ENCODE measurements at regions of chr3 and their contacts with region 1.

Region 1: DNA sequence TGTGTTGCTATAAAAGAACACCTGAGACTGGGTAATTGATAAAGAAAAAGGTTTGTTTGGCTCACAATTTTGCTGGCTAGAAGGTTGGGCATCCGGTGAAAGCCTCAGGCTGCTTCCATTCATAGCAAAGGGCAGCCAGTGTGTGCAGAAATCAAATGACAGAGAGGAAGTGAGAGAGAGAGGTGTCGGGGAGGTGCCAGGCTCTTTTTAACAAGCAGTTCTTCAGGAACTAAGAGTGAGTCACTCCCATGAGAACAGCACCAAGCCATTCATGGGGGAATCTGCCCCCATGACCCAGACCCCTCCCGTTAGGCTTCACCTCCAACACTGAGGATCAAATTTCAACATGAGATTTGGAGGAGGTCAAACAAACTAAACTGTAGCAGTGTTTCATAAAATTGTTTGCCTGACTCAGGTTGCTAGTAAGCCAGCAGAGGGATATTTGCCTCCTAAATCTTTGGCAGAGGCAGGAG is 4.5 kb upstream of the PARP15 start:
- DNase-seq: no peak
- ATAC-seq: peak; percentile 73
- H3K4me3 ChIP-seq: no peak overlapping the region
- H3K4me3 Mint-ChIP-seq: peak overlapping the region in 5 of 10 donors; percentile 10 to 68 (median 40)
- H3K27ac ChIP-seq: no peak overlapping the region
- H3K27ac Mint-ChIP-seq: peak overlapping the region; percentile 29 to 84 (median 67)
- H3K4me1 ChIP-seq: peaks cover 23 to 24% of the 10 kb centered on the region in 2 donors
- H3K4me1 Mint-ChIP-seq: peaks cover 30 to 74% (median 70%) of the 10 kb centered on the region in 7 donors
- H3K27me3 ChIP-seq: no peaks in the 10 kb centered on the region
- H3K27me3 Mint-ChIP-seq: no peaks in the 10 kb centered on the region

Region 2: GRCh38 chr3:122594025-122594424 is 21.0 kb after region 1 on chr3:
- CTCF ChIA-PET with region 1: interaction called, 3 read pairs
- POLR2A ChIA-PET with region 1: no interaction called
- intact Hi-C with region 1: loop called (anchors 2 kb)
- DNase-seq: no peak
- ATAC-seq: no peak
- H3K4me3 ChIP-seq: no peak overlapping the region
- H3K4me3 Mint-ChIP-seq: no peak overlapping the region
- H3K27ac ChIP-seq: no peak overlapping the region
- H3K27ac Mint-ChIP-seq: no peak overlapping the region
- H3K4me1 ChIP-seq: no peaks in the 10 kb centered on the region
- H3K4me1 Mint-ChIP-seq: peaks cover 2 to 11% (median 6%) of the 10 kb centered on the region in 7 donors
- H3K27me3 ChIP-seq: no peaks in the 10 kb centered on the region
- H3K27me3 Mint-ChIP-seq: no peaks in the 10 kb centered on the region

Region 3: DNA sequence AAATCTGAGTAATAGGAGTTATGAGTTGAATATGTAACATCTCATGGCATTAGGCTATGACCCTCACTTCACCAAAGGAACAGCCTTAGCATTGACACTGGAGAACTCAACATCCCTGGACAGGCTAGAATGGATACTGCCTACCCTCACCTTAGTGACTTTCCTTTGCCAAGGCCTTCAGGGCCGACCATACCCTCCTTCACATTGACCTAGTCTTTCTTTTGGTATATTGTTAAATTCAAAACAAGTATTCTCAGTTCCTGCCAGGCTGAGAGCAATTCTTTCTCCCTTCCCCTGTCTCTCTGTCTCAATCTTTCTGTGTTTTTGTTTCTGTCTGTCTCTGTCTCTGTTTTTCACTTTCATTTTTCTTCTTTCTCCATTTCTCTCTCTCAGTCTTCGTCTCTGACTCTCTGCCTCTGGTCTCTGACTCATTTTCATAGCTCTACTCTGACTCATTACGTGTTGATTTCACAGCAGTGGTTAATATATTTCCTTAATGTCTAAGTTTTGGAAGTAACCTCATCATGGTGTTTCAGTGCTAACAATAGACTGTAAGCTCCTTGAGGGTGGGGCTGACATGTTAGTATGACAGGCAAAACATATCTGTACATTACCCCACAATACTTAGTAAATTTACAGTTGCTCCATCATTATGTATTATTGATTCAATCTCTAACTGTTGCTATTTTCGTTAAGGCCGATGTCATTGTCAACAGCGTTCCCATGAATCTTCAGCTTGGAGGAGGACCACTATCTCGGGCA is 37.0 kb after region 1 on chr3:
- CTCF ChIA-PET with region 1: no interaction called
- POLR2A ChIA-PET with region 1: no interaction called
- intact Hi-C with region 1: loop called in 1 of 2 experiments (anchors 1 kb)
- DNase-seq: peak in 1 of 9 donors; percentile 30
- ATAC-seq: peak; percentile 73
- H3K4me3 ChIP-seq: no peak overlapping the region
- H3K4me3 Mint-ChIP-seq: peak overlapping the region in 2 of 10 donors; percentile 72 to 74
- H3K27ac ChIP-seq: no peak overlapping the region
- H3K27ac Mint-ChIP-seq: peak overlapping the region in 7 of 9 donors; percentile 39 to 96 (median 89)
- H3K4me1 ChIP-seq: no peaks in the 10 kb centered on the region
- H3K4me1 Mint-ChIP-seq: peaks cover 5 to 33% (median 8%) of the 10 kb centered on the region in 7 donors
- H3K27me3 ChIP-seq: no peaks in the 10 kb centered on the region
- H3K27me3 Mint-ChIP-seq: no peaks in the 10 kb centered on the region

Region 4: DNA sequence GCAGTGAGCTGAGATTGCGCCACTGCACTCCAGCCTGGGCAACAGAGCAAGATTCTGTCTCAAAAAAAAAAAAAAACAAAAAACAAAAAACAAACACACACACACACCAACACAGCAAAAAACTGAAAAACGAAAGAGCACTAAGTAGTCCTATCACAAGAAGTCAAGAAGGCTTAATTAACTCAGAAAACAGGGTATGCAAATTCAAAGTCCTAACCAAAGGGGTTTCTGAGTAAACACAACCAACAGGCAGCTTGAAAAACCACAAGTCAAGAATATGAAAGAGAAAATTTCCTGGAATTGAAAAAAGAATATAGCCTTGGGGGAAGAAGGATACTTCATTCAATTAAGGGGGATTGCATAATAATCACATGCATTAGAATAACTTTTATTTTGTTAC is 70.0 kb after region 1 on chr3:
- CTCF ChIA-PET with region 1: interaction called, 5 read pairs
- POLR2A ChIA-PET with region 1: no interaction called
- intact Hi-C with region 1: loop called in 1 of 2 experiments (anchors 1 kb)
- DNase-seq: no peak
- ATAC-seq: no peak
- H3K4me3 ChIP-seq: no peak overlapping the region
- H3K4me3 Mint-ChIP-seq: peak overlapping the region in 1 of 10 donors; percentile 68
- H3K27ac ChIP-seq: no peak overlapping the region
- H3K27ac Mint-ChIP-seq: peak overlapping the region in 2 of 9 donors; percentile 23 to 65
- H3K4me1 ChIP-seq: no peaks in the 10 kb centered on the region
- H3K4me1 Mint-ChIP-seq: peaks cover 2 to 47% (median 8%) of the 10 kb centered on the region in 7 donors
- H3K27me3 ChIP-seq: no peaks in the 10 kb centered on the region
- H3K27me3 Mint-ChIP-seq: peaks cover 0 to 14% (median 0%) of the 10 kb centered on the region in 5 donors

Measured in naive thymus-derived CD4-positive, alpha-beta T cell (primary cell).